ENCODE measurements at regions of chr11 and their contacts with region 1.

Region 1: GRCh38 chr11:61332797-61333549 is at the starts of genes DDB1 and TKFC:
- H3K4me3 ChIP-seq: peak within 1 kb of the TSS; percentile 99
- H3K27ac ChIP-seq: peak within 1 kb of the TSS; percentile 69
- H3K4me1 ChIP-seq: no peaks in the 10 kb centered on the region
- CTCF ChIP-seq: no peak; the same call in 1 of the 2 replicates

Region 2: DNA sequence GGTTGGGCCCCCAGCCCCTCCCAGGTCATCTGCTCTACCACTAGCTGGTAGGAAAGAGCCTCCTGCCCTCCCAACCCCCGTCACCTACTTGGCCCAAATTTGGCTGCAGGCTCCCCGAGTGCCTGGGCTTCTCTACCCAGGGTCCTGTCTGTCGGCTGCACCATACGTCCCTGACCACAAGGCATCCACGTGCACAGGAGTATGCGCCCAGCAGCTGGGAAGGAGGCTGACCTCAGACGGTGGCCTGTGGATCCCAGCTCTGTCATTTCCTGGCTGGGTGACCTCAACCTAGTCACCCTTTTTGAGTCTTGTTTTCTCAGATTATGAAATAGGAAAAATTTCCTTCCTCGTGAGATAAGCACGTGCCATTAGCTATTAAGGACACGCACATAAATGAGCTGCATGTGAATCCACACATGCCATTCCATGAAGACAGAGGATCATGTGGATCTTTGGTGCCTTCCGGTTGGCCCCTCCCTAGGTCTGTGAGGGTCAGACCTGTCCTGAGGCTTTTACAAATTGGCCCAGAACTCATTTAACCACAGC is 15.0 kb after region 1 on chr11:
- CTCF ChIA-PET with region 1: interaction called, 23 read pairs
- POLR2A ChIA-PET with region 1: interaction called, 3 read pairs
- H3K4me3 ChIP-seq: no peak overlapping the region
- H3K27ac ChIP-seq: no peak overlapping the region
- H3K4me1 ChIP-seq: no peaks in the 10 kb centered on the region
- CTCF ChIP-seq: no peak

Region 3: GRCh38 chr11:61369372-61370219 is 36.6 kb after region 1 on chr11:
- CTCF ChIA-PET with region 1: interaction called, 14 read pairs
- POLR2A ChIA-PET with region 1: interaction called, 4 read pairs
- H3K4me3 ChIP-seq: no peak overlapping the region
- H3K27ac ChIP-seq: no peak overlapping the region
- H3K4me1 ChIP-seq: no peaks in the 10 kb centered on the region
- CTCF ChIP-seq: no peak

Region 4: GRCh38 chr11:61392981-61393595 is 60.1 kb after region 1 on chr11:
- CTCF ChIA-PET with region 1: interaction called, 42 read pairs
- POLR2A ChIA-PET with region 1: interaction called, 13 read pairs
- H3K4me3 ChIP-seq: peak overlapping the region; percentile 70
- H3K27ac ChIP-seq: peak overlapping the region; percentile 65
- H3K4me1 ChIP-seq: no peaks in the 10 kb centered on the region
- CTCF ChIP-seq: 0 out of 2 replicates have a peak, but pooled peaks have one; percentile 12

Region 5: DNA sequence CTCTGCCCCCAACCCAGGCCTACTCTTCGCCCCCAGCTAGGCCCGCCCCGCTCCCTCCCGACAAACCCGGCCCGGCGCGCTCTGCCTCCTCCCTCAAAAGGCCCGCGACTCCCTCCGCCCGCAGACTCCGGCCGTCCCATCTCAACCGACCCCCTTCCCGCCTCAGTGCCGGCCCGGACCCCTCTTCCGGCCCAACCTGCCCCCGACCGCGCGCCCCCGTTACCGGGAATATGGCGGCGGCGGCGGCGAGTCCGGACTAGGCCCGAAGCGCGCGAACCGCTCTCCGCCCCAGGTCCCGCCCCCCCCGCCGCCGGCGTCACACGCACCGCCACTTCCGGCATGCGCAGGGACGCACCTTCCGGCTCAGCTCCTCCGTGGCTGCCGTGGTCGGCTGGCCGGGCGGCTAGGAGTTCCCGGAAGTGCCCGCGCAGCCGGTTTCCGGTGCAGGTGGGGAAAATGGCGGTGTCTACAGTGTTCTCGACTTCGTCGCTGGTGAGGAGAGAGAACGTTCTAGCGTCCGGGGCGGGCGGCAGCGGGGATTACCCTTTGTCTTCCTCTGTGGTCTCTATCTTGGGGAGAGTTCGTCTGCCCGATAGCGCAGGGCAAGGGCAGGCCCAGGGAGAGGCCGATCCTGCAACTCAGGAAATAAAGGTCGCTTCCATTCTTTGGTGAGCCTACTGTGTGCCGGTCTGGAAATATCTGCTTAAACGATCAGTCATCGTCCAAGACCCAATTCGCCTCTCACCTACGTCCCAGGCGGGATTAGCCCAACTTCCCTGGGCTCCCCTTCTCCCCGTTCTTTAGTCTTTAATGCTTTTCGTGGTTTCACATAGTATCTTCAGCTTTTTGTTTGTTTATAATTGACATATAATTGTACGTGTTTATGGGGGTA is 97.0 kb after region 1 on chr11 and contains the starts of genes CPSF7 and SDHAF2:
- CTCF ChIA-PET with region 1: interaction called, 12 read pairs
- POLR2A ChIA-PET with region 1: interaction called, 8 read pairs
- H3K4me3 ChIP-seq: peak within 1 kb of the TSS; percentile 99
- H3K27ac ChIP-seq: peak within 1 kb of the TSS; percentile 99
- H3K4me1 ChIP-seq: no peaks in the 10 kb centered on the region
- CTCF ChIP-seq: peak; percentile 49

Region 6: GRCh38 chr11:61482513-61482912 is 149.5 kb after region 1 on chr11:
- CTCF ChIA-PET with region 1: no interaction called
- POLR2A ChIA-PET with region 1: no interaction called
- H3K4me3 ChIP-seq: no peak overlapping the region
- H3K27ac ChIP-seq: no peak overlapping the region
- H3K4me1 ChIP-seq: no peaks in the 10 kb centered on the region
- CTCF ChIP-seq: peak; percentile 21; the same call in 1 of the 2 replicates